Cardiac septum (tissue), 1 donor: ENCODE measurements at regions of chr1 and their contacts with region 1.

Region 1: GRCh38 chr1:9942939-9943788 is at the starts of genes LZIC and NMNAT1:
- DNase-seq: peak; percentile 97
- total RNA-seq, gene LZIC: 29.7 TPM
- total RNA-seq, gene NMNAT1: 18.5 TPM

Region 2: GRCh38 chr1:9874959-9875635 is 68.1 kb before region 1 on chr1:
- intact Hi-C with region 1: loop called (anchors 2 kb)
- DNase-seq: peak; percentile 84

Region 3: GRCh38 chr1:9890224-9890731 is 52.9 kb before region 1 on chr1:
- intact Hi-C with region 1: no loop called
- DNase-seq: no peak

Region 4: DNA sequence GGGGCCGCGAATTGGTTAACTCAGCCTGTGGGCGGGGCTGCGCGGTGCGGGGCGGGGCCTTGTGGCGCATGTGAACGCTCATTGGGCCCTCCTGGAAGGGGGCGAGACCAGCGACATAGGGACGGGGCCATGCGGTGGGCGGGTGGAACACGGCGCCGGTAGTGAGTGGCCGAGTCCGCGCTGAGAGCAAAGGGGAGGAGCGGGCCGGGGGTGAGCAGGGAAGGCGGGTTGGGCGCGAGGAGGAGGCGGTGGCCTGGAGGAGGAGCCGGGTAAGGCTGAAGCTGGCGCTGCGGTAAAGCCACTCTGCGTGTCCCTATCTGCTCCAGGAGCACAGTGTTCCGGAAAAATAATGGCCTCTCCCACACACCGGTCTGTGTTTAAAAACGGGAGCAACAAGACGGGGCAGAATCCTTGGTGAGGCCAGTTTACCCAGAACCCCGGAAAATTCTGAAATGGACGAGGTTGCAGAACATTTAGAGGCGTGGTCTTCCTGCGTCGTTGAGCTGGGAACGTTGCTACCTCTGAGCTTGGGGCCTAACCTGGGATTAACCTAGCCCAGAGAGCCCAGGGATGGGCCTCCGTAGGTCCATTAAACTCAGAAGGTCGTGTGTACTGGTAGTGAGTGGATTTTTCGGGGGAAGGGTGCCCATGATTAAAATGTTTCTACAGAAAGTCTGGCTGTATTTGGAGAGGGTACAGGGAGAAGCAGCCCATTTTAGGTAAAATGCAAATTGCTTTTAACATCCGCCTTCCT is 32.6 kb before region 1 on chr1:
- intact Hi-C with region 1: loop called (anchors 2 kb)
- DNase-seq: peak; percentile 100

Region 5: DNA sequence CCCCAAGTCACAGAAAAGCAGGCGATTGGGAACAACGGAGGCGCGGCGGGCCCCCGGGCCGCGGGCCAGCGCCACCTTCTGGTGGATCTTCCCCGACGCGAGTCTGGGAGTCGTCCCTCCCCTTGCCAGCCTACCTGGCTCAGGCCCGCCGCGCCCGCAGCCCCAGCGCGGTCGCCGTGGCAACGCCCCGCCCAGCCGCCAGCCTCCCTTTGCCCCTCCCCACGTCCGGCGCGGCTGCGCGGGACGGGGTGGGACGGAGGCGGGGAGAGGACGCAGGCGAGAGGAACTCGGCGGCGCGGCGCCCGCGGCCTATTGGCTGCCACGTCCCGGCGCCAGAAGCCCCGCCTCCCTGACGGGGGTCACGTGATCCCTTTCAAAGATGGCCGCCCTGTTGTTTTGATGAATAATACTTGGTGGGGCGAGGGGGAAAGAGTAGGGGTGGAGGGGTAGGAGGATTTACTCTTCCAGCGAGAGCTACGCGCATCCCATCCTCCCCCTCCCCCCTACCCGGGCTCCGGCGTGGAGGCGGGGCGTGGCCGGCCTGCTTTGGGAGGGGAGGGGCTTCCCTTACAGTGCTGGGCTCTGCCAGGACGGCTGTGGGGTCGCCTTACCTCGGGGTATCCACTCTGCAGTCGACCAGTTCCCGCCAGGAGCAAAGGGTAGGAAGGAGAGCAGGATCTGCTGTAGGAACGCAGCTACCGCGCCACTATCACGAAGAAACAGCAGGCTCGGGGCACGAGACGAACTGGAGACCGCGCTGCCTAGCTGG is 89.6 kb after region 1 on chr1 and contains the start of gene UBE4B:
- intact Hi-C with region 1: loop called (anchors 2 kb)
- DNase-seq: peak; percentile 99
- total RNA-seq, gene UBE4B: 62.1 TPM

Region 6: DNA sequence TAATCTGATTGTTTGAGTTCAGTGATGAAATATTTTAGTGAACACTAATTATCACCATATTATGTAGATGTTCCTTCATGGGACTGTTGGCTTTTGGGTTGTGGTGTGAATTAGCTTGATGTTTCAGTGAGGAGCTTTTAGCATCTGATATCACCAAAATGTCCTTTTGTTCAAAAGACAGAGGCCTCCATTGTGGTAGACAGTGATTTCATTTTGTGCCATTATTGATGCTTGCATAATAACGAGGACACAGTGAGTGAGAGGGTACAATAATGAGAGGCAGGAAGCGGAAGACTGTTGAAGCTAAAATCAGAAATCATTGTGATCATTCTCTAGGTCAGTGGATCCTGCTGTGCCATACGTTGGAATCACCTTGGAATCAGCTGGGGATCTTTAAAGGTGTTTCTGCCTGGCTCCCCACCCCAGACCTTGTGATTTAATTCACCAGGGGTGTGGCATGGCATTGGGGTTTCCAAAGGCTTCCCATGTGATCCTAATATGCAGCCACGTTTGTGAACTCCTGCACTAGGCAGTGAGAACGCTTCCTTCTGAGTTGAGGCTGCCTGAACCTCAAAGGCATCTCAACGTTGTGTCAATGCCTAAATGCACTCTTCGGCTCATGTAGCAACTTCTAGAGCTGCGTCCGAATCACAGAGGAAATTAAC is 185.1 kb after region 1 on chr1:
- intact Hi-C with region 1: no loop called
- DNase-seq: no peak

Region 7: DNA sequence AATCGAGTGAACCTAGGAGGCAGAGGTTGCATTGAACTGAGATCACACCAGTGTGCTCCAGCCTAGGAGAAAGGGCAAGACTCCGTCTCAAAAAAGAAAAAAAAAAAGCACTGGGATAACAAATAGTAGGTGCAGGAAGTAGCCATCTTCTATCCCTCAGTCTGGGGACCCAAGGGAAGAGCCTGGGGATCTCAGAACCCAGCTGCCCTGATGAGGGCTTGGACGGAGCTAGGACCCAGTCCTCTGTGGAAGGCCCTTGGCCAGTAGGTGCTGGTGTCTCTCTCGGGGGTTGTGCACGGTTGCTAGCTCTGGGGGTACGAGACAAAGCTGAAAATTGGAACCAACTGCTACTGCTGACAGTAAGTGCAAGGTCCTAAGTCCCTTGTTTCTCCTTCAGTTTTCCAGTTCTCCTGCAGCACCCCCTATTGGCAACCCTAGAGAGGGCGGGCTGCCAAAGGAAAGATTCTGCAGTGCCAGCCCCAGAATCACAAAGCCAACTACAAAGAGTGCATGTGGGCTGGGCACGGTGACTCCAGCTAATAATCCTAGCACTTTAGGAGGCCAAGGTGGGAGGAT is 209.6 kb after region 1 on chr1:
- intact Hi-C with region 1: loop called (anchors 5 kb)
- DNase-seq: no peak